Activated CD4-positive, alpha-beta memory T cell treated with anti-CD3 and anti-CD28 coated beads for 36 hours (primary cell): ENCODE measurements at regions of chr6 and their contacts with region 1.

Region 1: GRCh38 chr6:112153926-112154607 is 66.7 kb downstream of the FAM229B start:
- DNase-seq: no peak
- H3K4me3 Mint-ChIP-seq: no peak overlapping the region
- H3K27ac Mint-ChIP-seq: peak overlapping the region; percentile 67
- H3K4me1 Mint-ChIP-seq: peaks cover 25% of the 10 kb centered on the region
- H3K27me3 Mint-ChIP-seq: peaks cover 12% of the 10 kb centered on the region

Region 2: GRCh38 chr6:112117554-112117953 is 36.5 kb before region 1 on chr6:
- CTCF ChIA-PET with region 1: no interaction called
- POLR2A ChIA-PET with region 1: no interaction called
- intact Hi-C with region 1: loop called (anchors 2 kb)
- DNase-seq: peak; percentile 28
- H3K4me3 Mint-ChIP-seq: no peak overlapping the region
- H3K27ac Mint-ChIP-seq: peak overlapping the region; percentile 23
- H3K4me1 Mint-ChIP-seq: peaks cover 14% of the 10 kb centered on the region
- H3K27me3 Mint-ChIP-seq: peaks cover 7% of the 10 kb centered on the region